ENCODE measurements at regions of chr15 and their contacts with region 1.

Region 1: GRCh38 chr15:48285329-48286214 is 45.7 kb upstream of the DUT start:
- DNase-seq: peak; percentile 38
- ATAC-seq: peak; percentile 92
- H3K4me3 ChIP-seq: no peak overlapping the region
- H3K27ac ChIP-seq: no peak overlapping the region
- H3K4me1 ChIP-seq: no peaks in the 10 kb centered on the region
- H3K27me3 ChIP-seq: no peaks in the 10 kb centered on the region
- CTCF ChIP-seq: peak; percentile 59 to 75 (median 73); a peak in 5 of 6 replicates
- EP300 ChIP-seq: no peak
- POLR2A ChIP-seq: no peak
- RAD21 ChIP-seq: peak; percentile 57

Region 2: DNA sequence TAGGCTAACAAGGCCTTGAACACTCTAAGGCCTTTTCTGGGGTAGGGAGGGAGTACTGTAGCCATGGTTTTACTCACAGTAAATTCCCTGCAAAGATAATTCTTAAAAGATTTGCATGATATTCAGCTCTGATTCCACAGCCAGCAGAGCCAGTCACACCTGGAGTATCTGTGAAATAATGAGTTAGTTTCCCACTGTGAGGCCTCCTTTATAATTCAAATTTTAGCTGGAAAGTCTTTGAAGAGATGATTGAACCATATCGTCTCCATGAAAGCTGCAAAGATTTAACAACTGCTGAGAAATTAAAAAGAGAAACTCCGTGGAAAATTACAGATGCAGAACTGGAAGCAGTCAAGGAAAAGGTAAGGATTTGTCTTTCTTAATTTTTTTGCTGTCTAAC is 13.3 kb after region 1 on chr15:
- CTCF ChIA-PET with region 1: interaction called, 24 read pairs
- POLR2A ChIA-PET with region 1: no interaction called
- RAD21 ChIA-PET with region 1: no interaction called
- SMC1A ChIA-PET with region 1: interaction called, 4 read pairs
- in situ Hi-C with region 1: no loop called
- intact Hi-C with region 1: no loop called
- DNase-seq: no peak
- ATAC-seq: no peak
- H3K4me3 ChIP-seq: no peak overlapping the region
- H3K27ac ChIP-seq: no peak overlapping the region
- H3K4me1 ChIP-seq: no peaks in the 10 kb centered on the region
- H3K27me3 ChIP-seq: no peaks in the 10 kb centered on the region
- CTCF ChIP-seq: no peak
- EP300 ChIP-seq: no peak
- POLR2A ChIP-seq: no peak
- RAD21 ChIP-seq: no peak

Region 3: GRCh38 chr15:48459571-48460470 is 174.2 kb after region 1 on chr15:
- CTCF ChIA-PET with region 1: no interaction called
- POLR2A ChIA-PET with region 1: no interaction called
- RAD21 ChIA-PET with region 1: no interaction called
- SMC1A ChIA-PET with region 1: no interaction called
- in situ Hi-C with region 1: no loop called
- intact Hi-C with region 1: no loop called
- DNase-seq: no peak
- ATAC-seq: no peak
- H3K4me3 ChIP-seq: no peak overlapping the region
- H3K27ac ChIP-seq: no peak overlapping the region
- H3K4me1 ChIP-seq: no peaks in the 10 kb centered on the region
- H3K27me3 ChIP-seq: no peaks in the 10 kb centered on the region
- CTCF ChIP-seq: no peak
- EP300 ChIP-seq: no peak
- POLR2A ChIP-seq: no peak
- RAD21 ChIP-seq: no peak

Measured in GM12878 (cell line).